HEK293 (cell line): ENCODE measurements at regions of chr5 and their contacts with region 1.

Region 1: DNA sequence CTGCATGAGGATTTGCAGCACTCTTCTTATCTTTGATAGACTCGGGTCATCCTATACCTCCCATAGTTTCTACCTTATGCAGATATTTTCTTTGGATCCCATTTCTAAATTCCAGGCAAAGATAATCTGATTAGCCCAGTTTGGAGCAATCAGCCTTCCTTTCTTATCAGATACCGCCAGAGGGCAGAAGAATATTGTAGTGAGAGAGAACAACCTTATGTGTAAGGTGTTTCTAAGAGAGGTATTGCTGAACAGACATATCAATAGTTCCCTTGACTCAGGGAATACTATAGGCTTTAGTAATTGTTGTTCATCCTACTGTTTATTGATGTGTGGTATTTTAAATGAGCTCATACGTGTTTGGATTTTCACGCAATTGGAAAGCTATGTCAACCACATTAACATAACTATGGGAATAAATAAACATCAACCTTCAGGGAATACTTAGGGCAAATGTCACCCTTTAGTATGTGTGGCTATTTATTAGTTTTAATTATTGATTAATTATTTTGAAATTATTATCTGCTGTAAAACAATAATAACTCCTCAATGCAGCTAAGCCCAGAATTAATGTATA is 1435.2 kb upstream of the CDH9 start:
- H3K4me3 ChIP-seq: no peak overlapping the region
- H3K27ac ChIP-seq: no peak overlapping the region
- H3K4me1 ChIP-seq: no peaks in the 10 kb centered on the region
- CTCF ChIP-seq: no peak

Region 2: DNA sequence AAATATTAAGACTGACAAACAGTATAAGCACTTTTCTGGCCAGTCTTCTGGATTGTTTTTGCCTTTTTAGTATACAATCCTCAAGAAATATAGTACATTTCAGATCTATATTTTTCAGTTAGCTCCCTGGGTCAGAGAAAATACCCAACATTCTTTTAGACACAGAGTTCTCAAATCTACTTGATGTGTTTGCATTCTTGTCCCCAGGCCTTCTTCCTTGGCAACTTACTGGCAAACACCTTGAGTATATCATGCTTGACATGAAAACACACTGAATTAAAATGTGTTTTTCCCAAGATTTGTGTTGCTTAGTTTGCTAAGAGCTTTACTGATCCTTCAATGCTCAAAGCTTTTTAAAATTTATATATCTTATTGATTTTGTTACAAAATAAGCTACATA is 22.1 kb before region 1 on chr5:
- CTCF ChIA-PET with region 1: no interaction called
- POLR2A ChIA-PET with region 1: no interaction called
- H3K4me3 ChIP-seq: no peak overlapping the region
- H3K27ac ChIP-seq: no peak overlapping the region
- H3K4me1 ChIP-seq: no peaks in the 10 kb centered on the region
- CTCF ChIP-seq: no peak

Region 3: GRCh38 chr5:28561522-28561921 is 87.9 kb after region 1 on chr5:
- CTCF ChIA-PET with region 1: no interaction called
- POLR2A ChIA-PET with region 1: no interaction called
- H3K4me3 ChIP-seq: no peak overlapping the region
- H3K27ac ChIP-seq: no peak overlapping the region
- H3K4me1 ChIP-seq: no peaks in the 10 kb centered on the region
- CTCF ChIP-seq: no peak

Region 4: DNA sequence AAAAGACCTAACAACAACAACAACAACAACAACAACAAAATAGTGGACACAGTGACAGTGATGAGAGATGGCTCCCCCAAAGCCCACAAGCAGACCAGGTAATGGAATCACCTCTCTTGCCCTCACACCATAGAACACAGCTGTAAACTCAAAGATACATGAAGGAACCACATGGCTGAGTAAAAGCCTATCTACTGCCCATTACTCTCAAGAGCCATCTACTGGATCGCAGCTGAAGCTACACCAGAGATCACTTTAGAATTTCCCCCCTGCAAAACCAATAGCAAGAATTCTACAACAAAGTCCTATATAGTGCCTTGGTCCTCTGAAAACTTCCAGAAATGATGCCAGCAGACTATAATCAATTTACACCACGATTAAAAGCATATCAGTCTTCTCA is 102.4 kb after region 1 on chr5:
- CTCF ChIA-PET with region 1: interaction called, 18 read pairs
- POLR2A ChIA-PET with region 1: no interaction called
- H3K4me3 ChIP-seq: no peak overlapping the region
- H3K27ac ChIP-seq: no peak overlapping the region
- H3K4me1 ChIP-seq: no peaks in the 10 kb centered on the region
- CTCF ChIP-seq: no peak

Region 5: GRCh38 chr5:28766565-28767158 is 293.0 kb after region 1 on chr5:
- CTCF ChIA-PET with region 1: interaction called, 21 read pairs
- POLR2A ChIA-PET with region 1: no interaction called
- H3K4me3 ChIP-seq: no peak overlapping the region
- H3K27ac ChIP-seq: no peak overlapping the region
- H3K4me1 ChIP-seq: no peaks in the 10 kb centered on the region
- CTCF ChIP-seq: no peak

Region 6: GRCh38 chr5:29498412-29498811 is 1024.8 kb after region 1 on chr5:
- CTCF ChIA-PET with region 1: no interaction called
- POLR2A ChIA-PET with region 1: no interaction called
- H3K4me3 ChIP-seq: no peak overlapping the region
- H3K27ac ChIP-seq: no peak overlapping the region
- H3K4me1 ChIP-seq: no peaks in the 10 kb centered on the region
- CTCF ChIP-seq: no peak